ENCODE measurements at regions of chr1 and their contacts with region 1.

Region 1: GRCh38 chr1:232630047-232630893 is at the start of gene SIPA1L2:
- DNase-seq: peak; percentile 76 to 94
- H3K4me3 ChIP-seq: peak within 1 kb of the TSS; percentile 59
- H3K4me1 ChIP-seq: peaks cover 16% of the 10 kb centered on the region
- H3K27me3 ChIP-seq: no peaks in the 10 kb centered on the region

Region 2: GRCh38 chr1:232319072-232319471 is 311.2 kb before region 1 on chr1:
- in situ Hi-C with region 1: loop called (anchors 10 kb)
- DNase-seq: peak; percentile 44 to 47
- H3K4me3 ChIP-seq: no peak overlapping the region
- H3K4me1 ChIP-seq: peaks cover 44% of the 10 kb centered on the region
- H3K27me3 ChIP-seq: no peaks in the 10 kb centered on the region

Region 3: GRCh38 chr1:232553050-232553754 is 77.1 kb before region 1 on chr1:
- in situ Hi-C with region 1: no loop called
- DNase-seq: no peak
- H3K4me3 ChIP-seq: no peak overlapping the region
- H3K4me1 ChIP-seq: peaks cover 44% of the 10 kb centered on the region
- H3K27me3 ChIP-seq: no peaks in the 10 kb centered on the region